Thyroid gland (tissue), 4 donors: ENCODE measurements at regions of chr12 and their contacts with region 1.

Region 1: GRCh38 chr12:108568338-108569154 is 6.2 kb downstream of the ISCU start:
- DNase-seq: no peak
- H3K4me3 ChIP-seq: no peak overlapping the region
- H3K27ac ChIP-seq: peak overlapping the region; percentile 18 to 60 (median 41)
- H3K4me1 ChIP-seq: peaks cover 8 to 43% of the 10 kb centered on the region in 2 donors
- H3K27me3 ChIP-seq: no peaks in the 10 kb centered on the region
- CTCF ChIP-seq: no peak
- POLR2A ChIP-seq: no peak

Region 2: GRCh38 chr12:108270035-108270848 is 298.3 kb before region 1 on chr12:
- intact Hi-C with region 1: no loop called
- DNase-seq: no peak
- H3K4me3 ChIP-seq: no peak overlapping the region
- H3K27ac ChIP-seq: no peak overlapping the region
- H3K4me1 ChIP-seq: no peaks in the 10 kb centered on the region
- H3K27me3 ChIP-seq: no peaks in the 10 kb centered on the region
- CTCF ChIP-seq: no peak
- POLR2A ChIP-seq: no peak

Region 3: GRCh38 chr12:108618079-108618952 is 49.8 kb after region 1 on chr12:
- intact Hi-C with region 1: loop called (anchors 2 kb)
- DNase-seq: peak; percentile 80 to 84
- H3K4me3 ChIP-seq: no peak overlapping the region
- H3K27ac ChIP-seq: peak overlapping the region; percentile 67 to 82 (median 74)
- H3K4me1 ChIP-seq: peaks cover 7 to 14% of the 10 kb centered on the region in 2 donors
- H3K27me3 ChIP-seq: no peaks in the 10 kb centered on the region
- CTCF ChIP-seq: peak; percentile 88 to 95 (median 92)
- POLR2A ChIP-seq: no peak

Region 4: DNA sequence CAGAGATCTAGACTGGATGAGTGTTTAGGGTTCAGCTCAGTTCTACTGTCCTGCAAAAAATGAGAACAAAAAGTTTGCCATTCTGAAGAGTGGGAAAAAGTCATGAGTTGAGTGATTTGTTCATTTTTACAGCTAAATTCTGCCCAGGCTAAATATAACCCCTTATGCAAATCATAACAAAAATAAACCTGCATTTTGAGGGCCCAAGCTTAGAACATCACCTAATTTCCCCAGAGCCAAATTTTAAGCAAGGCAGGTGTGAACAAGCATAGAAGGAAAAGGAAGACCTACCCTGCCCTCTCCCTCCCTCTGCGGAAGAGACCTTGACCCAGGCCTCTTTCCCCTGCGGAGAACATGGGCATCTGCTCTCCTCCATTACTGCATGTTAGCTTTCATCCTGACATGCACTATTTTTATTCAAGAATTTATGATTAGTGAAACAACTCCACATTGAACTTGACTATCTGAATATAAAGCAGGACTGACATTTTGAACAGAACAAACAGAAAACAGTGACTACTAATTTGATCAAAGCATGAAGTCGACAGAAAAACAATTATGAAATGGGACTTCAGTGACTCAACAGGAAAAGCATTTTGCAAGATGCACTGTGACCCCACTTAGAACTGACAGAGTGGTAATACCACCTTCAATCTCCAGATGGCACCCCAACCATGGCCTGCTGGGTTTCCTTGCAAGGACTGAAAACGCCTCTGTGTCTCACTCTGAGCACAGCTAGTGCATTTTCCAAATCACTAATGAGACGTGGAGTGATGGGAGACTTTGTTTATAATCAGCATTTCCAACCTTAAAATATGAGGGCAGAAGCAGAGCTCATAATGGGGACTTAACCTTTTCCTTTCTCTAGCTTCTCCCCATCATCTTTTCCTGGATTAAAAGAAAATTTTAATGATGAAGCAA is 96.1 kb after region 1 on chr12:
- intact Hi-C with region 1: no loop called
- DNase-seq: peak; percentile 81 to 84
- H3K4me3 ChIP-seq: no peak overlapping the region
- H3K27ac ChIP-seq: peak overlapping the region; percentile 65 to 84 (median 80)
- H3K4me1 ChIP-seq: peaks cover 0 to 14% of the 10 kb centered on the region in 2 donors
- H3K27me3 ChIP-seq: no peaks in the 10 kb centered on the region
- CTCF ChIP-seq: peak; percentile 77 to 99 (median 94)
- POLR2A ChIP-seq: no peak